ENCODE measurements at regions of chr4 and their contacts with region 1.

Region 1: GRCh38 chr4:71184195-71184781 is 154.5 kb upstream of the SLC4A4 start:
- DNase-seq: peak; percentile 55
- H3K4me3 ChIP-seq: no peak overlapping the region
- H3K27ac ChIP-seq: no peak overlapping the region
- H3K4me1 ChIP-seq: no peaks in the 10 kb centered on the region
- H3K27me3 ChIP-seq: peaks cover 5% of the 10 kb centered on the region
- CTCF ChIP-seq: peak; percentile 61

Region 2: GRCh38 chr4:71050809-71051208 is 133.5 kb before region 1 on chr4:
- CTCF ChIA-PET with region 1: no interaction called
- POLR2A ChIA-PET with region 1: no interaction called
- intact Hi-C with region 1: no loop called
- DNase-seq: no peak
- H3K4me3 ChIP-seq: no peak overlapping the region
- H3K27ac ChIP-seq: no peak overlapping the region
- H3K4me1 ChIP-seq: no peaks in the 10 kb centered on the region
- H3K27me3 ChIP-seq: no peaks in the 10 kb centered on the region
- CTCF ChIP-seq: no peak

Region 3: GRCh38 chr4:71229477-71230270 is 45.4 kb after region 1 on chr4:
- CTCF ChIA-PET with region 1: interaction called, 22 read pairs
- POLR2A ChIA-PET with region 1: no interaction called
- intact Hi-C with region 1: no loop called
- DNase-seq: peak; percentile 49
- H3K4me3 ChIP-seq: no peak overlapping the region
- H3K27ac ChIP-seq: no peak overlapping the region
- H3K4me1 ChIP-seq: peaks cover 13% of the 10 kb centered on the region
- H3K27me3 ChIP-seq: no peaks in the 10 kb centered on the region
- CTCF ChIP-seq: peak; percentile 64

Region 4: GRCh38 chr4:71553605-71554004 is 369.3 kb after region 1 on chr4:
- CTCF ChIA-PET with region 1: no interaction called
- POLR2A ChIA-PET with region 1: no interaction called
- intact Hi-C with region 1: loop called (anchors 10 kb)
- DNase-seq: peak; percentile 4
- H3K4me3 ChIP-seq: no peak overlapping the region
- H3K27ac ChIP-seq: no peak overlapping the region
- H3K4me1 ChIP-seq: no peaks in the 10 kb centered on the region
- H3K27me3 ChIP-seq: no peaks in the 10 kb centered on the region
- CTCF ChIP-seq: peak; percentile 43; the same call in 1 of the 2 replicates

Measured in A673 (cell line).